Calu3 (cell line): ENCODE measurements at regions of chr3 and their contacts with region 1.

Region 1: DNA sequence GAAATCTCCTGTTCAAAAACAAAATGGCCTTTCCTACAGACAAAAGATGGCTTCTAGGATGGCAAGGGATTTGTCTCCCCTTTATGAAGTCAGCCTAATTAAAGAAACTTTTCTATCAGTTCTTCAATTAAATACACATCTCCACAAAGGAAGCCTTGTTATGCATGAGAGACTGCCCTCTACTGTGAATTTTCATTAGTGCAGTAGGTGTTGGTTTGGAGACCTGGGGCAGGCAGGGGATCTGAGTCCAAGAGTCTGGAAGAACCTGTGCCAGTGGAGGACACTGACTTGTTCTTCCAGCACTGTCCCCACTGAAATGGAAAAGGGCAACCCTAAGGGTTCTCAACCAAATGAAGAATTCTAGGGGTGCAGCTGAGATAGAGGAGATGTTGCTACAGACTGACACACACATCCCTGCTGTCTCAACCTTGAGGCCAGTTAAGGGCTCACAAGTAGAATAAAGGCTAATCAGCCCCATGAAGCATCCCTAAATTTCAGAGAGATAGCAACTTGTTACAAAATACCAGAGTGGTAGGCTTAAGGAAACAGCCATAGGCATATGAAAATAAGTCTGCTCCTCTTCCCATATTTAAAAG is 174.0 kb upstream of the PRICKLE2 start:
- DNase-seq: peak; percentile 60
- H3K4me3 Mint-ChIP-seq: no peak overlapping the region
- H3K27ac Mint-ChIP-seq: no peak overlapping the region
- H3K4me1 Mint-ChIP-seq: no peaks in the 10 kb centered on the region
- H3K27me3 Mint-ChIP-seq: no peaks in the 10 kb centered on the region
- CTCF ChIP-seq: no peak

Region 2: GRCh38 chr3:64023187-64023848 is 376.0 kb before region 1 on chr3 and contains the start of gene PSMD6:
- CTCF ChIA-PET with region 1: no interaction called
- intact Hi-C with region 1: loop called (anchors 2 kb)
- DNase-seq: peak; percentile 95
- H3K4me3 Mint-ChIP-seq: peak within 1 kb of the TSS; percentile 78
- H3K27ac Mint-ChIP-seq: peak within 1 kb of the TSS; percentile 84
- H3K4me1 Mint-ChIP-seq: peaks cover 8% of the 10 kb centered on the region
- H3K27me3 Mint-ChIP-seq: peaks cover 18% of the 10 kb centered on the region
- CTCF ChIP-seq: peak; percentile 92
- total RNA-seq, gene PSMD6: 65.4 and 73.3 TPM in 2 replicates

Region 3: GRCh38 chr3:64030741-64031140 is 368.6 kb before region 1 on chr3:
- CTCF ChIA-PET with region 1: no interaction called
- intact Hi-C with region 1: loop called (anchors 2 kb)
- DNase-seq: peak; percentile 81
- H3K4me3 Mint-ChIP-seq: peak overlapping the region; percentile 49
- H3K27ac Mint-ChIP-seq: no peak overlapping the region
- H3K4me1 Mint-ChIP-seq: peaks cover 10% of the 10 kb centered on the region
- H3K27me3 Mint-ChIP-seq: peaks cover 36% of the 10 kb centered on the region
- CTCF ChIP-seq: peak; percentile 86

Region 4: DNA sequence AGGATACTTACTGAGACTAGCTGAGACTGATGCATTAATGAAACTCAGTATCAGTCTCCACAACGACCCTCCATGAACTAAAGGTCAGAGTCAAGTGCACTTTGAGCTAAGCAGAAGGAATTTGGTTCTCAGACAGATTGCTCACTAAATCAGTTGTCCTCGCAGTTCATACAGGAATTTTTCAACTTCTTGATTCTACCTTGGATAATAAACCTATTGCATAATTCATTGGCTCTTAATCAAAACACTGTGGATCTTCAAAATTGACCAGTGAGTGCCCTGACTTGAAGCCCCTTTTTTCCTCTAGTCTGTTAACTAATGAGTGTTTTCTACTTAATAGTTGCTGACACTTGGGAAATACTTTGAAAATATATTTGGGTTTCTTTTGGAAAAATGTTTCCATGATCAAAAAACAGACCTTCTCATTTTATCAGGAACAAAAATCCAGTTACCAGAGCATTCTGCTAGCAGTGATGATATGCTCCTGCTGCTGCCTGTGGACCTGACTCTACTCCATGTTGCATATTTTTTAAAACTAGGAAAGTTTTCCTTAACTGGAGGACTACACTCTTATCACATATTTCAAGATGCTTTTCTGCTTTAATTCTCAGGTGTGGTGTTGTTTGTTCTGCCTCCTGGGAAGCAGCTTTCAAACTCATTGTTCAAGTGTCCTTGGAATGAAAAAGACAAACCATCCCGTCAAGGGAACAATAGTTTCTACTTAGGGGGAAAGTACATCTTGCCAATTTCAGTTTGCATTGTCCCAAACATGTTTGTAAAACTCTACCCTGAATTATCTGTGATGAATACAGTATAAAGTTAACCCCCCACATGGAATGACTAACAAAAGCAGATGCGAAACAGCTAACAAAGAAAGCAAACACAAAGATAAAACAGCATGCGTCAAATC is 336.2 kb before region 1 on chr3:
- CTCF ChIA-PET with region 1: no interaction called
- intact Hi-C with region 1: no loop called
- DNase-seq: no peak
- H3K4me3 Mint-ChIP-seq: no peak overlapping the region
- H3K27ac Mint-ChIP-seq: no peak overlapping the region
- H3K4me1 Mint-ChIP-seq: no peaks in the 10 kb centered on the region
- H3K27me3 Mint-ChIP-seq: peaks cover 31% of the 10 kb centered on the region
- CTCF ChIP-seq: no peak

Region 5: DNA sequence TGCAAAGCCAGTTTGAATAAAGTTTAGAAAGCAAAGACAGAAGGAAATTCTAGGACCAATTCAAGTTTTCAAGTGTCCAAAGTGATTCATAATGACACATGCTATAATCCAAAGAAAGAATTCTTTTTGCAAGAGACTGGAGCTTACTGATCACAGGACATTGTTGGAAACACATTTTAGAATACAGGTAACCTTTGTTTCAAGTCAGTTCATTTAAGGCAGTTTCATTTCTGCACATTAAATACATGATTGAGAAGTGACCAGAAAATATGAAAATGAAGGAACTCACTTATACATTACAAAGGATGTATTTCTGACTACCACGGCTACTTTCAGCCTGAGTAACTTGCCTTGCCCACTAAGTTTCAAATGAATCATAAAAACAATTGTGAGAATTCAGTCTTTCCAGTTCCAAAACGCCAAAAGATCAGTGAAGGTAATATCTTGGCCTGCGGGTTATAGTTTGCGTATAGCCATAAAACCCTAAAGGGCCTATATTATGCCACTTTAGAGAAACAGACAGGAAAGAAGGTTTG is 222.8 kb before region 1 on chr3:
- CTCF ChIA-PET with region 1: no interaction called
- intact Hi-C with region 1: loop called (anchors 2 kb)
- DNase-seq: no peak
- H3K4me3 Mint-ChIP-seq: no peak overlapping the region
- H3K27ac Mint-ChIP-seq: no peak overlapping the region
- H3K4me1 Mint-ChIP-seq: peaks cover 33% of the 10 kb centered on the region
- H3K27me3 Mint-ChIP-seq: no peaks in the 10 kb centered on the region
- CTCF ChIP-seq: no peak

Region 6: GRCh38 chr3:64244011-64244942 is 155.0 kb before region 1 on chr3:
- CTCF ChIA-PET with region 1: no interaction called
- intact Hi-C with region 1: loop called (anchors 5 kb)
- DNase-seq: peak; percentile 32
- H3K4me3 Mint-ChIP-seq: no peak overlapping the region
- H3K27ac Mint-ChIP-seq: no peak overlapping the region
- H3K4me1 Mint-ChIP-seq: peaks cover 40% of the 10 kb centered on the region
- H3K27me3 Mint-ChIP-seq: no peaks in the 10 kb centered on the region
- CTCF ChIP-seq: peak; percentile 38

Region 7: GRCh38 chr3:64262574-64263114 is 136.7 kb before region 1 on chr3:
- CTCF ChIA-PET with region 1: interaction called, 6 read pairs
- intact Hi-C with region 1: loop called (anchors 2 kb)
- DNase-seq: no peak
- H3K4me3 Mint-ChIP-seq: no peak overlapping the region
- H3K27ac Mint-ChIP-seq: no peak overlapping the region
- H3K4me1 Mint-ChIP-seq: no peaks in the 10 kb centered on the region
- H3K27me3 Mint-ChIP-seq: peaks cover 18% of the 10 kb centered on the region
- CTCF ChIP-seq: no peak

Region 8: DNA sequence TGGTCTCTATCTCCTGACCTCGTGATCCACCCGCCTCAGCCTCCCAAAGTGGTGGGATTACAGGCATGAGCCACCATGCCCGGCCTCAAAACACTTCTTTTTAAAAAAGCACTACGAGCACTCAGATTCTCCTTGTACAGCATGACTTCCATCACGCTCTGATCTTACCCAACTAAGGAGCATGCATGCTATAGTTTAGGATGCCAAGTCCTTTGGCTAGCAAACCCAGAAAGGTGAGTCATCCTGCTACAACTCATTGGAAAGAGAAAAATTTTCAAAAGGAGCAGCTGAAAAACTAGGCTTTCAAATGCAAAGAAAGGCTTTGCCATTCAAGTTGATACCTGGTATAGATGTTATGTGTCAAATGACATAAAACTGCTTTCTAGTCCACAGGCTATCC is 103.7 kb before region 1 on chr3:
- CTCF ChIA-PET with region 1: no interaction called
- intact Hi-C with region 1: no loop called
- DNase-seq: no peak
- H3K4me3 Mint-ChIP-seq: no peak overlapping the region
- H3K27ac Mint-ChIP-seq: no peak overlapping the region
- H3K4me1 Mint-ChIP-seq: peaks cover 9% of the 10 kb centered on the region
- H3K27me3 Mint-ChIP-seq: no peaks in the 10 kb centered on the region
- CTCF ChIP-seq: no peak

Region 9: DNA sequence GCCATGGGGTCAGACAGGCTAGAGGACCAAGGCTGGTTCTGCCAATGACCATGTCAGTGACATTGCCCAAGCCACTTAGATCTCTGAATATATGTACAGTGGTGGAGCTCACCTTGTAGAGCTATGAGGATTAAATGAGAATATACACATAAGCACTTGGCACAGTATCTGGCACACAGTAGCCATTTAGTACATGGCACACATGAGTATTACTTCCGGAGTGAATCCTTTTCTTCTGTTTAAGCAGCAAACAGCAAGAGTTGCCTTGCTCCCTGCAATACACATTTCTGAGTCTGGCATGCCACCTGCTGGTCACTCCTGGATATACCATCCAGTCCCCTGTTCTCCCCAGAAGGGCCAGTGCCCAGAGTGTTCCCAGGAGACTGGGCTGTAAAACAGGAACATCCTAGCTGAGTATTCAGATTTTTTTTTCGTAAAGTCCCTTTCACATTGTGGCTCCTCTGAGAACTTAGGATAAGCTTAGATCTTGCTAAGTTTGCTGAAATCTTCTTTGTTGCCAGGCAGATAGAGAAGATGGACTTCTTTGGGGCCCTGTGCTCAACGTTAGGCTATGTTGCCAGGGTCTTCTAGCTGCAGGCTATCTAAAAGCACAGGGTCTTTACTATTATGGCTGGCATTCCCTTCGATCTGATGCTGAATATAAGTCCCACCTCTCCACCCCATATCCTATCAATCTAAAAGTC is 85.1 kb after region 1 on chr3:
- CTCF ChIA-PET with region 1: interaction called, 3 read pairs
- intact Hi-C with region 1: loop called (anchors 5 kb)
- DNase-seq: peak; percentile 83
- H3K4me3 Mint-ChIP-seq: no peak overlapping the region
- H3K27ac Mint-ChIP-seq: no peak overlapping the region
- H3K4me1 Mint-ChIP-seq: no peaks in the 10 kb centered on the region
- H3K27me3 Mint-ChIP-seq: peaks cover 25% of the 10 kb centered on the region
- CTCF ChIP-seq: peak; percentile 78

Region 10: GRCh38 chr3:64945171-64945729 is 545.9 kb after region 1 on chr3:
- CTCF ChIA-PET with region 1: no interaction called
- intact Hi-C with region 1: no loop called
- DNase-seq: no peak
- H3K4me3 Mint-ChIP-seq: no peak overlapping the region
- H3K27ac Mint-ChIP-seq: no peak overlapping the region
- H3K4me1 Mint-ChIP-seq: no peaks in the 10 kb centered on the region
- H3K27me3 Mint-ChIP-seq: no peaks in the 10 kb centered on the region
- CTCF ChIP-seq: no peak